Lower leg skin (tissue), 4 donors: ENCODE measurements at regions of chr2 and their contacts with region 1.

Region 1: DNA sequence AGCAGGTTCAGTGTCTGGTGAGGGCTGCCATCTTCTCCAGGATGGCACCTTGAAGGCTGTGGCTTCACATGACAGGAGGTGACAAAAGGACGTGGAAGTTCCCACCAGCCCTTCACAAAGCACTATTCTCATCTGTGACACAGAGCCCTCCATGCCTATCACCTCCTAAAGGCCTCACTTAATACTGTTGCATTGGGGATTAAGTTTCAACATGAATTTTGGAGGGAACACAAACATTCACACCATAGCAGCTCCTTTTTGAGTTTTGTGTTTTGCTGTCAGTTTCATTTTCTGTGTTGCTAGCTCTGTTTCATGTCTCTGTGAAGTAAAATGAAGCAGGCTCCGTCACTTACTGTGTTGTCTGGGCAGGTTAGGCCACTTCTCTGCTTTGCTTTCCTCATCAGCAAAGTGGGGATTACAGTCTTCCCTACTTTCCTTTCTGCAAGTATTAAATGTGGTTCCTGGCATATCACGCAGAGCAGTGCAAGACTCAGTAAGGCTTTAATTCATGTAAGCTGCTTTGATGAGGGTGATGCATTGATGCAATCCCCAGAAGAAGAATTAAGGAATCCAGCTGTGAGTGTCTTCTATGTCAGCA is 31.6 kb downstream of the LIMS1 start:
- DNase-seq: no peak
- H3K4me3 ChIP-seq: no peak overlapping the region
- CTCF ChIP-seq: no peak
- POLR2A ChIP-seq: no peak

Region 2: GRCh38 chr2:106886916-106887758 is 1678.7 kb before region 1 on chr2:
- intact Hi-C with region 1: no loop called
- DNase-seq: no peak
- H3K4me3 ChIP-seq: no peak overlapping the region
- CTCF ChIP-seq: no peak
- POLR2A ChIP-seq: no peak

Region 3: DNA sequence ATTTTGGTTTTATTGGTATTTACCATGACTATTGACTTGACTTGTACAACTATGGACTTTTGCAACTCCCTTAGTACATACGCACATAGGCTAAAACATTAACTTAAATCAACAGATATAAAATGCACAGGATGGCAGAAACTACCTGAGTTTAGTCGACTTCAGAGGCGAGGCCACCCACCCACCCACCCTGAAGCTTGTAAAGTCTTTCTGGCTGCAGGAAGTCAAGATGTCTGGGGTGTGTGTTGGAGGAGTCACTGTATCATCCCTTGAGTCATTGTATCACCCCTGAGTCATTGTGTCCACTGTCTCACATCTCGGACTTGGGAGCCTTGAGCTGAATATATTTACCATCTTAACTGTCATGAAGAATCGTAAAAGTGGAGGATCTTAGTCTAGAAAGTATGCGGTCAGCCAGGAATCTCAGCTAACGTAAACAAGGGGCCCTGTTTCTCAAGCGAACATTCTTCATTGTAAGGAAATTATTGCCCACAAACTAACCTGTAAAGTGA is 1540.0 kb before region 1 on chr2:
- intact Hi-C with region 1: no loop called
- DNase-seq: no peak
- H3K4me3 ChIP-seq: no peak overlapping the region
- CTCF ChIP-seq: no peak
- POLR2A ChIP-seq: no peak

Region 4: DNA sequence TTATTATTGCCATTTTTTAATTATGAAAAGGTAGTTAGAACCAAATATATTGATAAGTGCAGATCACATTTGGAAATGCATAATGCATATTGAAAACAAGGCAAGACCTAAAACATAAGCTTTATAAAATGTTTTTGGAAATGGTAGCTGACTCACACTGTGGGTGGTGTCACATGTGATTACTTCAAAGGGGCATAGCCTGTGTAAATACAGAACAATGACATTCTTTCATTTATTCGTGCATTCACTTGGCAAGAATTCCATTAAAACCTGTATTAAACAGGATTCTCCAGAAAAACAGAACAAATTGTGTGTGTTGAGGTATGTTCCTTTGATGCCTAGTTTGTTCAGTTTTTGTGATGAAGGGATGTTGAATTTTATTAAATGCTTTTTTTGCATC is 1252.6 kb before region 1 on chr2:
- intact Hi-C with region 1: no loop called
- DNase-seq: no peak
- H3K4me3 ChIP-seq: no peak overlapping the region
- CTCF ChIP-seq: no peak
- POLR2A ChIP-seq: no peak

Region 5: GRCh38 chr2:108212671-108213070 is 353.2 kb before region 1 on chr2:
- intact Hi-C with region 1: no loop called
- DNase-seq: no peak
- H3K4me3 ChIP-seq: no peak overlapping the region
- CTCF ChIP-seq: no peak
- POLR2A ChIP-seq: no peak

Region 6: DNA sequence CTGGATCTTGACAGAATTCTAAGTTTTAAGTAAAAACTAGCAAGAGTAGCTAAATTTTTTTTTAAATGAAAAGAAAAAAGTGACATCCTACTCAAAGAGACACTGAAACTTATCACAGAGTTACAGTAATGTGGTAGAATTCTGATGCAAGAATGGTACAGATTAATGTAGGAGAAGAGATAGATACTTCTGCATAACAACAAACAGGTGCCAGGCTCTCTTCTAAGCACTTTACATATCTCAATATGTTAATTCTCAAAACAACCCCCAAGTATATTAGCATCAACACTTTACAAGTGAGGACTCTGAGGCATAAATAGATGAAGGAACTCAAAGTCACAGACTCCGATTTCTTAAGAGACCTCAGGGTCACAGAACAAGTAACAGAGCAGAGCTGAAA is 88.8 kb before region 1 on chr2:
- intact Hi-C with region 1: loop called (anchors 5 kb)
- DNase-seq: no peak
- H3K4me3 ChIP-seq: no peak overlapping the region
- CTCF ChIP-seq: no peak
- POLR2A ChIP-seq: no peak